ENCODE measurements at regions of chr4 and their contacts with region 1.

Region 1: GRCh38 chr4:17614416-17615299 is at the start of gene MED28:
- DNase-seq: peak; percentile 91 to 96 (median 94)
- H3K4me3 ChIP-seq: peak within 1 kb of the TSS; percentile 72 to 100 (median 95)
- H3K27ac ChIP-seq: peak within 1 kb of the TSS; percentile 27 to 98 (median 86)
- H3K27me3 ChIP-seq: no peaks in the 10 kb centered on the region
- CTCF ChIP-seq: peak in 54 of 56 donors; percentile 13 to 66 (median 44)
- total RNA-seq, gene MED28: 42.6 to 89.2 (median 58.0) TPM

Region 2: DNA sequence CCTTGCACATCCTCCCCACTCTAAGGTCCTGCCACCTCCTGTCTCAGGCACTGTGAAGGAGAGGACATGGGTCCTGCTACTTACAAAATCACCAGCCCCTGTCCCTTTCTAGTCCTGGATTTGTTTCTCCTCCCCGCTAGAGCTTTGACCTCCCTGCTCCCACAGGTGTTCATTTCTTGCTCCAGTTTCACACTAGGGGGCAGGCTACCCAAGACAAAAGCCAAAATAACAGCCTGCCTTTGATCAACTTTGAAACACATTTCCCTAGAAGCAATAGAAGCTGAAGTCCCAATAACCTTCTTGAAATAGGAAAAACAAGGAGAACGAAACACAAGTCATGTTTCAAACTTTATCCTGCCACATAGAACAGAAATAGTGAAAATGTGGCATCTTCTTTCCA is 267.2 kb before region 1 on chr4:
- intact Hi-C with region 1: no loop called
- DNase-seq: no peak
- H3K4me3 ChIP-seq: no peak overlapping the region
- H3K27ac ChIP-seq: no peak overlapping the region
- H3K27me3 ChIP-seq: no peaks in the 10 kb centered on the region
- CTCF ChIP-seq: peak in 55 of 56 donors; percentile 19 to 72 (median 56)

Region 3: GRCh38 chr4:17544205-17544604 is 70.5 kb before region 1 on chr4:
- intact Hi-C with region 1: loop called in 1 of 2 experiments (anchors 2 kb)
- DNase-seq: peak; percentile 23 to 94 (median 87)
- H3K4me3 ChIP-seq: peak overlapping the region in 2 of 59 donors; percentile 18 to 21
- H3K27ac ChIP-seq: peak overlapping the region; percentile 66 to 100 (median 95)
- H3K27me3 ChIP-seq: no peaks in the 10 kb centered on the region
- CTCF ChIP-seq: peak in 4 of 56 donors; percentile 6 to 23 (median 20)

Region 4: DNA sequence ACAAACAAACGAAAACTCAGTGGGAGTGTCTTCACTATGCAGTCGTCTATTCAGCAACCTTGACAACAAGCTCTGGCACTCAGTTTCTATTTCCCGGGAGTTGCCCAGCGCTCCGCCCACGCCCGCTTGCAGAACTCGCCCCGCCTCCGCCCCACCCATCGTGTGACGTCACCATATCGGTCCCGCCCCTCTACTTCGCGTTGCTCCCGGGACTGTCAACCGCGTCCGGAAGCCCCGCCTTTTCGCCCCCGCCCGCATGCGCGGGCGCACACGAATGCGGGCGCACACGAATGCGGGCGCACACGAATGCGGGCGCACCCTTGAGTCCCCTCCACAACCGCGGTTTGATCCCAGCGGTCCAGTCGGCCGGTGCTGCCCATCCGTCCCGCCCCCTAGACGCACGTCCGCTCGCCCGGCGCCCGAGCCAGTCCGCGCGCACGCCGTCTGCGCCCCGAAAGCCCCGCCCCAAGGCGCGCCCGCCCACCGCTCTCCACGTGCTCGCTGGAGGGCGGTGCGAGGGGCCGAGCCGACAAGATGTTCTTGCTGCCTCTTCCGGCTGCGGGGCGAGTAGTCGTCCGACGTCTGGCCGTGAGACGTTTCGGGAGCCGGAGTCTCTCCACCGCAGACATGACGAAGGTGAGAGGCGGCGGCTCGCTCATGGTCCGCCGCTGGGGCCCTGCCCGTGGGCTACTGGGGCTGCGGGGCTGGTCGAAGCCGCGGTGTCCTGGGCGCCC is 37.6 kb before region 1 on chr4 and contains the start of gene LAP3:
- intact Hi-C with region 1: loop called (anchors 1 to 2 kb)
- DNase-seq: peak; percentile 98 to 99 (median 99)
- H3K4me3 ChIP-seq: peak within 1 kb of the TSS; percentile 63 to 100 (median 91)
- H3K27ac ChIP-seq: peak within 1 kb of the TSS; percentile 17 to 98 (median 92)
- H3K27me3 ChIP-seq: no peaks in the 10 kb centered on the region
- CTCF ChIP-seq: peak in 20 of 56 donors; percentile 4 to 55 (median 20)
- total RNA-seq, gene LAP3: 29.7 to 116 (median 52.0) TPM